Stomach (tissue), 19 donors: ENCODE measurements at regions of chr6 and their contacts with region 1.

Region 1: DNA sequence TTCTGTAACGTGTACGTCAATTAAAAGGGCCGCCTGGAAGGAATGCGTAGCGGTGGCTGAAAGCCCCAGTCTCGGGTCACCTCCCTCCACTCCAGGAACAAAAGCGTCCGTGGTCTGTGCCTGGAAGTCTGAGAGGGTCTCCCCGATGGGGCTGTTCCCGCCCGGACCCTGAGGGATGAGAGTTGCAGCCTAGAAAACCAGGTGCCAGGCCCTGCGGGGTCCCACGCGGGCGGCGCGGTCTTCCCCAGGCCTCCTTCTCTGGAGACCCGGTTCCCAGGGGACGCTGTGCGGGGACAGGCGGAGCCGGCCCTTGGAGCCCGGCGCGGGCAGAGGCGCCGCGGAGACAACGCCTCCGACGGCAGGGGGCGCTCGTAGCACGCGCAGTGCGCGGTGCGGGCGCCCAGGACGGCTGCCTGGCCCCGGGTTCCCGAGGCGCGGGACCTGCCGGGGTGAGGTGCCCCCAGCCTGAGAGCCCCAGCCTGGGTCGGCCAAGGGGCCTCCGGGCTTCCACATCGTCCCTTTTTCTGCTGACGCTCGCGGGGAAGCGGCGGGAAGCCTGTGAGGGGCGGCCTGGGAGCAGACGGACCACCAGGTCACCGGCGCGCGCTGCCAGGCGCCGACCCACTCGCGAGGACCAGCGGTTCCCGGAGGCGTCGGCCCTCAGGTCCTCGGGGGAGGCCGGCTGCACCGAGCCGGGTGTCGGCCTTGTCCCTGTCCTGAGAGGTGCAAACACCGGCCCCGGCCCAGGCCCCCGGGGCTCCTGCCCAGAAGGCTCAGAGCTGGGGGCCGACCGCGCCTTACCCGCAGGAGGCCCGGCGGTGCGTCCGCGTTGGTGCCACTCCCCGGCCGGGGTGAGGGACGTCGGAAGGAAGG is 5.3 kb upstream of the FOXC1 start:
- DNase-seq: peak; percentile 70 to 87
- H3K4me3 ChIP-seq: peak overlapping the region; percentile 36 to 62 (median 50)
- H3K27ac ChIP-seq: no peak overlapping the region
- H3K4me1 ChIP-seq: peaks cover 39 to 62% (median 56%) of the 10 kb centered on the region in 4 donors
- H3K27me3 ChIP-seq: peaks cover 54 to 100% (median 84%) of the 10 kb centered on the region in 3 donors
- CTCF ChIP-seq: peak in 5 of 7 experiments; percentile 45 to 98 (median 87)
- EP300 ChIP-seq: no peak
- POLR2A ChIP-seq: no peak

Region 2: DNA sequence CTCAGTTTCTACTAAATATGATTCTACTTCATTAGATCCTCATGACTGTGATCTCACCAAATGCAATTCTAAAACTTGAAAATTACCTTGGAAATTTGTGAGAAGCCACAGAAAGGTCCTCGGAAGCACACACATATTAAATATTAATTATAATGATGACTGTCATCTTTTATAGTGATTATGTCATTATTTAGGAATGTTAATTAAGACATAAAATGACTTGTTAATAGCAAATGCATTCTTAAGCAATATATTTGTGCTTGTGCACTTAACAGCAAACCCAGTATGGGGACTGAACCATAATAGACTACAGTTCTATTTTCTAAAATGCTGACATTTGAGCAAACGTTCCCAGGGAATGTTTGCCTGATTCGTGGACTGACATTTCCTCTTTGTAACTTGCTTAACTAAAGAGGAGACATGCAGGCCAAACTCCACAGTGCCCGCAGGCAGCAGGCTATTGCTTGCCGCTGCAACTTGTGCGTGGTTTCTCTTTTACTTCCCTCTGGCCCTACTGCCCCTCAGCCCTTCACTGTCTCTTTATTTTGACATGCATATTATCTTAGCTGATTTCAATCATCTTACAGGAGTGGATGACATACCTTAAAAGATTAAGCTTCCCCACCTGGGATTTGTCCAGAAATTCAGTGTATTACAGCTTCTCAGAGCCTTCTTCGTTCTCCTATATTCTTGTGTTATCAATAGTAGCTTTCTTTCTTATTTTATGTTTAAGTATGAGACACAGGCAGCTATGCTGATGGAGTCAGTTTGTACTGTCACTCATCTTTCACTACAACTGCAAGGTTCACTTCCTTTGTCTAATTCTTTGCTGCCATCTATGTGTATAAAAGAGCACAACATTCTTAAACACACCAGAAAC is 499.5 kb after region 1 on chr6:
- intact Hi-C with region 1: loop called (anchors 5 kb)
- DNase-seq: peak in 1 of 2 donors; percentile 61
- H3K4me3 ChIP-seq: no peak overlapping the region
- H3K27ac ChIP-seq: peak overlapping the region in 1 of 5 donors; percentile 4
- H3K4me1 ChIP-seq: peaks cover 4 to 25% (median 11%) of the 10 kb centered on the region in 4 donors
- H3K27me3 ChIP-seq: no peaks in the 10 kb centered on the region
- CTCF ChIP-seq: peak in 5 of 7 experiments; percentile 7 to 50 (median 33)
- EP300 ChIP-seq: no peak
- POLR2A ChIP-seq: no peak